H1 (cell line): ENCODE measurements at regions of chr10 and their contacts with region 1.

Region 1: DNA sequence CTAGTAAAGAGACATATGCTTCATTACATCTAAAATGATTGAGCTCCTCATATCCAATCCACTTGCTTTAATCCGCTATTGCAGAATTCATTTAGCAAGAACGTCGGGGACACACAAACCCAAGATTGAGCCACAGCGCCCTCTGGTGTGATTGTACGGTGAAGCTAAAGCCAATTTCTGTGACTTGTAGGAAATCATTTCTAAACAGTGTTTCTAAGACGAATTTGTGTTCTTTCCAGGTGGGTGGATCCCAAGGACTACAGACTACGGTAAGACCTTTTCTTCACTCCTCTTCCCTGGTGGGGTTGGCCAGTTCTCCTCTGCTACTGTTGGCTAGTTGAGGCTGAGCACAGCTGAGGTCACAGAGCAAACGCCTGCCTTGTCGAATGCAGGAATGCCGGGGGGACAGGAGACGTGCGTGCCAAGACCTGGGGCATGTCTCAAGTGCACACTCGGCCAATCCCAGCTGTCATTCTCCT is 5.2 kb downstream of the DMBT1 start:
- DNase-seq: peak; percentile 44 to 89
- H3K4me3 ChIP-seq: no peak overlapping the region
- H3K27ac ChIP-seq: no peak overlapping the region
- H3K4me1 ChIP-seq: peaks cover 0 to 2% (median 0%) of the 10 kb centered on the region in 4 experiments; a peak in 1 of 7 replicates
- H3K27me3 ChIP-seq: no peaks in the 10 kb centered on the region
- CTCF ChIP-seq: peak; percentile 55 to 85 (median 84)
- EP300 ChIP-seq: no peak
- POLR2A ChIP-seq: no peak
- RAD21 ChIP-seq: peak; percentile 91 to 95

Region 2: GRCh38 chr10:122232769-122233168 is 333.0 kb before region 1 on chr10:
- CTCF ChIA-PET with region 1: no interaction called
- POLR2A ChIA-PET with region 1: no interaction called
- DNase-seq: no peak
- H3K4me3 ChIP-seq: no peak overlapping the region
- H3K27ac ChIP-seq: no peak overlapping the region
- H3K4me1 ChIP-seq: no peaks in the 10 kb centered on the region
- H3K27me3 ChIP-seq: no peaks in the 10 kb centered on the region
- CTCF ChIP-seq: no peak
- EP300 ChIP-seq: no peak
- POLR2A ChIP-seq: no peak
- RAD21 ChIP-seq: no peak

Region 3: GRCh38 chr10:122298598-122299301 is 267.0 kb before region 1 on chr10:
- CTCF ChIA-PET with region 1: interaction called, 24 read pairs
- POLR2A ChIA-PET with region 1: no interaction called
- DNase-seq: peak; percentile 70 to 82
- H3K4me3 ChIP-seq: no peak overlapping the region
- H3K27ac ChIP-seq: no peak overlapping the region
- H3K4me1 ChIP-seq: peaks cover 0 to 3% (median 2%) of the 10 kb centered on the region in 4 experiments; a peak in 6 of 7 replicates
- H3K27me3 ChIP-seq: no peaks in the 10 kb centered on the region
- CTCF ChIP-seq: peak; percentile 81 to 90 (median 89)
- EP300 ChIP-seq: no peak
- POLR2A ChIP-seq: no peak
- RAD21 ChIP-seq: peak; percentile 96 to 98

Region 4: DNA sequence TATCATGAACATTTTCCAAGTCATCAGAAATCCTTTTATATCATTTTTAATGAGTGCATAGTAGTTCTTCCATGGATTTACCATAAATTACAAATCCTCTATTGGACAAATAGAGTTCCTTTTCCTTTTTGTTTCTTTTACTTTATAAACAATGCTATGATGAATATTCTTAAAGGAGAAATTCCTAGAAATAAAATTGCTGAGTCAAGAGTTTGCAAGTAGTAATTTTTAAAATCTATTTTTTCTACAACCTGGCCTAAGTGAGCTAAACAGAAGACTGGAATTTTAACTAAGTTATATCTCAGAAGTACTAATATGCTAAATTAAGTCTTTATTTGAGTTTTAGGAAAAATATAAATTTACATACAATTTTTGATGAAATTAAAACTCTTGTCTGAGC is 152.4 kb before region 1 on chr10:
- CTCF ChIA-PET with region 1: no interaction called
- POLR2A ChIA-PET with region 1: no interaction called
- DNase-seq: no peak
- H3K4me3 ChIP-seq: no peak overlapping the region
- H3K27ac ChIP-seq: no peak overlapping the region
- H3K4me1 ChIP-seq: no peaks in the 10 kb centered on the region
- H3K27me3 ChIP-seq: no peaks in the 10 kb centered on the region
- CTCF ChIP-seq: no peak
- EP300 ChIP-seq: no peak
- POLR2A ChIP-seq: no peak
- RAD21 ChIP-seq: no peak

Region 5: DNA sequence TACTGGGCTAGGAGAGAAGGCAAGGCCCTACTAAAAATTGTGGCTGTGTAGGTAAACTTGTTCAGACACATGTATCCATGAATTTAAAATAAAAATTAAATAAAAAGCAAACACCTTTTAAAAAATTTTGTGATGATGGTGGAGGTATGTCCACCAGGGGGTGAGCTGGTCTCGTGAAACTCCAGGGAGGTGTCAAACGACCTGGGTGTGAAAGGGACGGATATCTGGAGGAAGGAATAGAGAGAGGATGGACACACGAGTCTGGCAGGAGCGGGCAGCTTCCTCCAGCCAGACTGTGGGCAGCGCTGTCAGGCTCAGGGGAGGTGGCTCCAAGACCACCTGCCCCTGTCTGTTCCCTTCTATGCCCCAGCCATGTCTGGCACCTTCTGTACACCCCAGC is 40.0 kb before region 1 on chr10:
- CTCF ChIA-PET with region 1: interaction called, 29 read pairs
- POLR2A ChIA-PET with region 1: no interaction called
- DNase-seq: no peak
- H3K4me3 ChIP-seq: no peak overlapping the region
- H3K27ac ChIP-seq: no peak overlapping the region
- H3K4me1 ChIP-seq: no peaks in the 10 kb centered on the region; a peak in 1 of 7 replicates
- H3K27me3 ChIP-seq: no peaks in the 10 kb centered on the region
- CTCF ChIP-seq: peak in 2 of 3 experiments; percentile 20 to 25; a peak in 2 of 4 replicates
- EP300 ChIP-seq: no peak
- POLR2A ChIP-seq: no peak
- RAD21 ChIP-seq: peak; percentile 57 to 61

Region 6: GRCh38 chr10:122551450-122551849 is 14.3 kb before region 1 on chr10:
- CTCF ChIA-PET with region 1: interaction called, 63 read pairs
- POLR2A ChIA-PET with region 1: no interaction called
- DNase-seq: no peak
- H3K4me3 ChIP-seq: no peak overlapping the region
- H3K27ac ChIP-seq: no peak overlapping the region
- H3K4me1 ChIP-seq: no peaks in the 10 kb centered on the region
- H3K27me3 ChIP-seq: no peaks in the 10 kb centered on the region
- CTCF ChIP-seq: peak in 2 of 3 experiments; percentile 3 to 13; a peak in 2 of 4 replicates
- EP300 ChIP-seq: no peak
- POLR2A ChIP-seq: no peak
- RAD21 ChIP-seq: peak in 1 of 2 experiments; percentile 11; a peak in 1 of 4 replicates

Region 7: GRCh38 chr10:122618461-122619165 is 52.8 kb after region 1 on chr10:
- CTCF ChIA-PET with region 1: interaction called, 21 read pairs
- POLR2A ChIA-PET with region 1: no interaction called
- DNase-seq: no peak
- H3K4me3 ChIP-seq: no peak overlapping the region
- H3K27ac ChIP-seq: no peak overlapping the region
- H3K4me1 ChIP-seq: no peaks in the 10 kb centered on the region
- H3K27me3 ChIP-seq: no peaks in the 10 kb centered on the region
- CTCF ChIP-seq: no peak
- EP300 ChIP-seq: no peak
- POLR2A ChIP-seq: no peak
- RAD21 ChIP-seq: no peak

Region 8: DNA sequence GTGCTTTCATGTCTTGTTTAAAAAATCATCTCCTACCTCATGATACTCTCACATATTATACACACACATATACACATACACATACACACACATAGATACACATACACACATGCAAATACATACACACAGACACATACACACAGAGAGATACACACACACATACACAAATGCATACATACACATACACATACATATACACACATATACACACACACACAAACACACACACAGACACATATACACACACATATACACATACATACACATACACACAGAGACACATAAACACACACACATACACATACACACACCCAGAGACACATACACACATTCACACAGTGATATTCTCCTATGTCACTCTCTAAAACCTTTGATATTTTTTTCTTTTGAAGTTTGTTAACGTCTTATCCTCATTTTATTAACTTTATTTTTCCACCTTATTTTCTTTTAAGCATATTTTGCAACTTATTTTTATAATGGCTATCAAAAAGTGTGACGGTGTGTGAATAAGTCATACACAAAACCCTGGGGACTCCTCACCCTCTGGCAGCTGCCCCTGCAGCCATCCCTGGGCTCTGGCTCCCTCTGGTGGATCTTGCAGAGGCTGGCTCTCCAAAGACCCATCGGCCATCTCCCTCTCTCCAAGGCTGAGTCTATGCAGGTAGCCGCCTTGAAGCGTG is 137.8 kb after region 1 on chr10:
- CTCF ChIA-PET with region 1: interaction called, 20 read pairs
- POLR2A ChIA-PET with region 1: no interaction called
- DNase-seq: peak; percentile 46 to 86
- H3K4me3 ChIP-seq: no peak overlapping the region
- H3K27ac ChIP-seq: no peak overlapping the region
- H3K4me1 ChIP-seq: no peaks in the 10 kb centered on the region; a peak in 1 of 7 replicates
- H3K27me3 ChIP-seq: no peaks in the 10 kb centered on the region
- CTCF ChIP-seq: peak; percentile 92 to 97 (median 95)
- EP300 ChIP-seq: no peak
- POLR2A ChIP-seq: no peak
- RAD21 ChIP-seq: peak; percentile 99

Region 9: GRCh38 chr10:122725768-122726167 is 160.0 kb after region 1 on chr10:
- CTCF ChIA-PET with region 1: no interaction called
- POLR2A ChIA-PET with region 1: no interaction called
- DNase-seq: peak in 1 of 2 experiments; percentile 63
- H3K4me3 ChIP-seq: no peak overlapping the region
- H3K27ac ChIP-seq: no peak overlapping the region
- H3K4me1 ChIP-seq: peaks cover 0 to 2% (median 0%) of the 10 kb centered on the region in 4 experiments; a peak in 1 of 7 replicates
- H3K27me3 ChIP-seq: no peaks in the 10 kb centered on the region
- CTCF ChIP-seq: peak; percentile 49 to 75 (median 70); a peak in 3 of 4 replicates
- EP300 ChIP-seq: no peak
- POLR2A ChIP-seq: no peak
- RAD21 ChIP-seq: peak; percentile 33 to 49; a peak in 3 of 4 replicates

Region 10: GRCh38 chr10:122884166-122884565 is 318.4 kb after region 1 on chr10:
- CTCF ChIA-PET with region 1: no interaction called
- POLR2A ChIA-PET with region 1: no interaction called
- DNase-seq: no peak
- H3K4me3 ChIP-seq: no peak overlapping the region
- H3K27ac ChIP-seq: no peak overlapping the region
- H3K4me1 ChIP-seq: peaks cover 0 to 4% (median 0%) of the 10 kb centered on the region in 4 experiments; a peak in 2 of 7 replicates
- H3K27me3 ChIP-seq: peaks cover 0 to 3% (median 0%) of the 10 kb centered on the region in 4 experiments; a peak in 3 of 7 replicates
- CTCF ChIP-seq: no peak
- EP300 ChIP-seq: no peak
- POLR2A ChIP-seq: no peak
- RAD21 ChIP-seq: no peak